ENCODE measurements at regions of chr6 and their contacts with region 1.

Region 1: GRCh38 chr6:2988426-2989331 is 11.0 kb upstream of the NQO2 start:
- DNase-seq: peak; percentile 85 to 88
- ATAC-seq: peak; percentile 73 to 82
- H3K4me3 ChIP-seq: peak overlapping the region; percentile 58 to 84 (median 84)
- H3K27ac ChIP-seq: peak overlapping the region; percentile 80 to 95 (median 94)
- H3K4me1 ChIP-seq: peaks cover 7 to 19% of the 10 kb centered on the region in 2 donors
- H3K27me3 ChIP-seq: no peaks in the 10 kb centered on the region
- CTCF ChIP-seq: peak in 4 of 5 experiments; percentile 86 to 99 (median 94)
- POLR2A ChIP-seq: peak; percentile 46 to 69

Region 2: GRCh38 chr6:2765166-2765895 is 223.3 kb before region 1 on chr6 and contains the start of gene WRNIP1:
- in situ Hi-C with region 1: no loop called
- intact Hi-C with region 1: loop called (anchors 5 kb)
- DNase-seq: peak; percentile 98 to 100
- ATAC-seq: peak; percentile 87 to 90
- H3K4me3 ChIP-seq: peak within 1 kb of the TSS; percentile 62 to 88 (median 74)
- H3K27ac ChIP-seq: peak within 1 kb of the TSS; percentile 85 to 96 (median 91)
- H3K4me1 ChIP-seq: peaks cover 39 to 47% of the 10 kb centered on the region in 2 donors
- H3K27me3 ChIP-seq: no peaks in the 10 kb centered on the region
- CTCF ChIP-seq: peak; percentile 56 to 81 (median 75)
- POLR2A ChIP-seq: peak; percentile 90 to 92
- total RNA-seq, gene WRNIP1: 51.9 to 66.0 (median 57.3) TPM

Region 3: GRCh38 chr6:2848851-2849250 is 139.8 kb before region 1 on chr6:
- in situ Hi-C with region 1: no loop called
- intact Hi-C with region 1: loop called (anchors 1 kb)
- DNase-seq: no peak
- ATAC-seq: no peak
- H3K4me3 ChIP-seq: no peak overlapping the region
- H3K27ac ChIP-seq: no peak overlapping the region
- H3K4me1 ChIP-seq: peaks cover 16% of the 10 kb centered on the region in 2 donors
- H3K27me3 ChIP-seq: no peaks in the 10 kb centered on the region
- CTCF ChIP-seq: no peak
- POLR2A ChIP-seq: no peak

Region 4: DNA sequence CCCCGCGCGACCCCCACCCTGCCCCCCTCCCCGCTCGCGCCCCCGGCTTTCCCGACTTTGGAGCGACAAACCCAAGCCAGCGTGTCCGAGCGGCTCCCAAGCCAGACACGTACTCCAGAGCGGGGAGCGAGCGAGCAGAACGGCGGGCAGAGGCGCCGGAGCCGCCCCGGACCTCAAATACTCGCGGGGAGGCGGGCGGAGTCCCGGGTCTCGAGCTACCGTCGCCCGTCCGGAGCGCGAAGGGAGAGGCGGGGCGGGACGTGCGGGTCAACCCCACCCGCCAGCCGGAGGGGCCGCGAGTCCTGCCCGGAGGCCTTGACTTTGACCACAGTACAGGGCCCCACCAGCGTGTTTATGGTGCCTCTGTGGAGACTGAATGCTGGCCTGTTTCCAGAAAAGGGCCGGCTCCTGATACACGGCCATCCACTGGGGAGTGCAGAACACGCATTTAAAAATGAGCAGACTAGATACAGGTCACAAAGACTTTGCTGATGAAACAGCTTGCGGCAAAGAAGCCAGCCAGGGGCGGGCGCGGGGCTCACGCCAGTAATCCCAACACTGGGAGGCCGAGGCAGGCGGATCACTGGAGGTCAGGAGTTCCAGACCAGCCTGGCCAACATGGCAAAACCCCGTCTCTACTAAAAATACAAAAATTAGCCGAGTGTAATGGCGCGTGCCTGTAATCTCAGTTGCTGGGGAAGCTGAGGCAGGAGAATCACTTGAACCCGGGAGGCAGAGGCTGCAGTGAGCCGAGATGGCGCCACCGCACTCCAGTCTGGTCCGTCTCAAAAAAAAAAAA is 17.1 kb before region 1 on chr6 and contains the start of gene SERPINB6:
- in situ Hi-C with region 1: no loop called
- intact Hi-C with region 1: loop called (anchors 2 kb)
- DNase-seq: peak; percentile 74 to 82
- ATAC-seq: peak; percentile 76 to 77
- H3K4me3 ChIP-seq: peak within 1 kb of the TSS; percentile 79 to 85 (median 82)
- H3K27ac ChIP-seq: peak within 1 kb of the TSS; percentile 94 to 100 (median 99)
- H3K4me1 ChIP-seq: peaks cover 14 to 24% of the 10 kb centered on the region in 2 donors
- H3K27me3 ChIP-seq: no peaks in the 10 kb centered on the region
- CTCF ChIP-seq: no peak
- POLR2A ChIP-seq: no peak
- total RNA-seq, gene SERPINB6: 114 to 260 (median 189) TPM

Region 5: GRCh38 chr6:3258720-3259490 is 270.2 kb after region 1 on chr6 and contains the start of gene PSMG4:
- in situ Hi-C with region 1: loop called in 1 of 4 experiments (anchors 25 kb)
- intact Hi-C with region 1: no loop called
- DNase-seq: peak; percentile 92 to 93
- ATAC-seq: peak; percentile 84 to 85
- H3K4me3 ChIP-seq: peak within 1 kb of the TSS; percentile 88 to 91 (median 90)
- H3K27ac ChIP-seq: peak within 1 kb of the TSS; percentile 84 to 93 (median 92)
- H3K4me1 ChIP-seq: peaks cover 33 to 41% of the 10 kb centered on the region in 2 donors
- H3K27me3 ChIP-seq: no peaks in the 10 kb centered on the region
- CTCF ChIP-seq: peak in 2 of 5 experiments; percentile 11 to 16
- POLR2A ChIP-seq: peak; percentile 82 to 84
- total RNA-seq, gene PSMG4: 16.4 to 27.6 (median 22.0) TPM